ENCODE measurements at regions of chr10 and their contacts with region 1.

Region 1: DNA sequence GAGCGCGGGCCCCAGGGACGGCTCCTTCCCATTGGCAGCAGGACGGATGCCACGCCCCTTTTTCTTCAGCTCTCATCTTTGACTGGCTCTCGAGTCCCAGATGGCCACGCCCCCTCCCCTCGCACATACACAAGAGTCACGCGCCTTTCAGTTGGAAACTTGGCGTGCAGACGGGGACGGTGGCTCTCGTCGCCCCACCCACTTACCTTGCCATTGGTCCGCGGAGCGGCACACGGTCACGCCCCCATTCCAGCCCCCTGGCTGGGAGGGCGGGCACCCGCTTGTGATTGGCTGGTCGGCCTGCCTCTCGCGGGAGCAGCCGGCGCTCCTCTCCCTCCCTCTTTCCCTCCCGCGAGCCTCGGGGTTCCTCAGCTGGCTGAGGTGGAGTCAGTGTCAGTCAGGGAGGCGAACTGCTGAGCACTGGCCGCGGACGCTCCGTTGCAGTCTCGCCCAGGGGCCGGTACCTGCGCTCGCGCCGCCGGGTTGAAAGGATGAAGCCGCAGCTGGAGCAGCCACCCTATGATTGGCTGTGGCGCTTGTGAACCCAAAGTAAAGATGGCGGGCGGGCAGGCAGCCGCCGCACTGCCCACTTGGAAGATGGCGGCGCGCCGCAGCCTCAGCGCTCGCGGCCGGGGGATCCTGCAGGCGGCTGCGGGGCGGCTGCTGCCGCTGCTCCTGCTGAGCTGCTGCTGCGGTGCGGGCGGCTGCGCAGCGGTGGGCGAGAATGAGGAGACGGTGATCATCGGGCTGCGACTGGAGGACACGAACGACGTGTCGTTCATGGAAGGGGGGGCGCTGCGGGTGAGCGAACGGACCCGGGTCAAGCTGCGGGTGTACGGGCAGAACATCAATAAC is at the start of gene CNNM2:
- DNase-seq: peak; percentile 100
- ATAC-seq: peak; percentile 90
- H3K4me3 ChIP-seq: peak within 1 kb of the TSS; percentile 60 to 95 (median 93)
- H3K4me3 Mint-ChIP-seq: peak within 1 kb of the TSS; percentile 98
- H3K27ac ChIP-seq: peak within 1 kb of the TSS; percentile 92 to 94
- H3K27ac Mint-ChIP-seq: peak within 1 kb of the TSS; percentile 96
- H3K4me1 ChIP-seq: peaks cover 31 to 33% of the 10 kb centered on the region in 2 donors
- H3K4me1 Mint-ChIP-seq: peaks cover 53% of the 10 kb centered on the region
- H3K27me3 ChIP-seq: peaks cover 0 to 12% (median 6%) of the 10 kb centered on the region in 4 experiments
- H3K27me3 Mint-ChIP-seq: peaks cover 12% of the 10 kb centered on the region
- CTCF ChIP-seq: no peak
- total RNA-seq, gene CNNM2: 20.2 and 21.6 TPM in 2 replicates

Region 2: GRCh38 chr10:102132563-102133372 is 785.4 kb before region 1 on chr10 and contains the start of gene PPRC1:
- CTCF ChIA-PET with region 1: no interaction called
- POLR2A ChIA-PET with region 1: no interaction called
- intact Hi-C with region 1: loop called (anchors 10 kb)
- DNase-seq: peak; percentile 98
- ATAC-seq: peak; percentile 94
- H3K4me3 ChIP-seq: peak within 1 kb of the TSS; percentile 70 to 97 (median 82)
- H3K4me3 Mint-ChIP-seq: peak within 1 kb of the TSS; percentile 94
- H3K27ac ChIP-seq: peak within 1 kb of the TSS; percentile 79 to 88
- H3K27ac Mint-ChIP-seq: peak within 1 kb of the TSS; percentile 94
- H3K4me1 ChIP-seq: peaks cover 18 to 25% of the 10 kb centered on the region in 2 donors
- H3K4me1 Mint-ChIP-seq: peaks cover 36% of the 10 kb centered on the region
- H3K27me3 ChIP-seq: no peaks in the 10 kb centered on the region
- H3K27me3 Mint-ChIP-seq: no peaks in the 10 kb centered on the region
- CTCF ChIP-seq: peak; percentile 96
- total RNA-seq, gene PPRC1: 35.3 and 36.3 TPM in 2 replicates

Region 3: DNA sequence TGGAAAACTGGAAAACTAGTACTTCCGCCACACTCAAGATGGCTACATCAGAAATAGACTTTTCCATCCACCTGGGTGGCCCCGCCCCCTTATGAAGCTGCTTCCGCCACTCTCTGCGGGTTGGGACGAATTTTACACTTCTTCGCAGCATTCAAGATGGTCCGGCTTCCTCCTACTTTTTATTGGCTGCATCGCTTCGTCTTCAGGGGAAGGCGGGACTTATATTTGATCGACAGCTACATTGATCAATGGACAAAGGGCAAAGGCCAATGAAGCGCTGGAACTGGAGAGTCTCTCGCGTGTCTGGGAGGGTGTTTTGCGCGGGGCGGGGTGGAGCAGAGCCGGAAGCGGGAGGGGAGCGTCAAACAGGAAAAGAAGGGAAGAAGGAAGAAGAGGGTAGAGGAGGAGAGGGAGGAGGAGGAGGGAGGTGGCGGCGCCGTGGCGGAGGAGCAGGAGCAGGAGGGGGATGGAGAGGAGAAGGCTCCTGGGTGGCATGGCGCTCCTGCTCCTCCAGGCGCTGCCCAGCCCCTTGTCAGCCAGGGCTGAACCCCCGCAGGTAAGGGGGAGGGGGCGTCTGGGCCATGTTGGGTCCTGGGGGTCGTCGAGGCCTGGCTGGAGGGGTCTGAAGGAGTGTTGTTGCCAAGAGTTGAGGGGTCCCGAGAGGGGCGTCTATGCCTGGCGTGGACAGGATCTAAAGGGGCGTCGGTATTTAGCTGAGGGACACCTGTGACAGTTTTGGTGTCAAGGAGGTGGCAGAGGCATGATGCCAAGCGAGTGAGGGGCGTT is 174.4 kb before region 1 on chr10 and contains the start of gene WBP1L:
- CTCF ChIA-PET with region 1: no interaction called
- POLR2A ChIA-PET with region 1: no interaction called
- intact Hi-C with region 1: loop called (anchors 1 kb)
- DNase-seq: peak; percentile 98
- ATAC-seq: peak; percentile 95
- H3K4me3 ChIP-seq: peak within 1 kb of the TSS; percentile 70 to 96 (median 89)
- H3K4me3 Mint-ChIP-seq: peak within 1 kb of the TSS; percentile 89
- H3K27ac ChIP-seq: peak within 1 kb of the TSS; percentile 58 to 86
- H3K27ac Mint-ChIP-seq: peak within 1 kb of the TSS; percentile 88
- H3K4me1 ChIP-seq: peaks cover 24 to 25% of the 10 kb centered on the region in 2 donors
- H3K4me1 Mint-ChIP-seq: peaks cover 42% of the 10 kb centered on the region
- H3K27me3 ChIP-seq: peaks cover 0 to 2% (median 0%) of the 10 kb centered on the region in 4 experiments
- H3K27me3 Mint-ChIP-seq: no peaks in the 10 kb centered on the region
- CTCF ChIP-seq: peak; percentile 16
- total RNA-seq, gene WBP1L: 43.2 and 44.3 TPM in 2 replicates

Region 4: GRCh38 chr10:103069453-103070331 is 151.5 kb after region 1 on chr10:
- CTCF ChIA-PET with region 1: interaction called, 49 read pairs
- POLR2A ChIA-PET with region 1: no interaction called
- intact Hi-C with region 1: no loop called
- DNase-seq: peak; percentile 82
- ATAC-seq: peak; percentile 80
- H3K4me3 ChIP-seq: peak overlapping the region in 1 of 5 experiments; percentile 39
- H3K4me3 Mint-ChIP-seq: peak overlapping the region; percentile 64
- H3K27ac ChIP-seq: peak overlapping the region; percentile 50 to 73
- H3K27ac Mint-ChIP-seq: peak overlapping the region; percentile 67
- H3K4me1 ChIP-seq: peaks cover 26% of the 10 kb centered on the region in 2 donors
- H3K4me1 Mint-ChIP-seq: peaks cover 33% of the 10 kb centered on the region
- H3K27me3 ChIP-seq: no peaks in the 10 kb centered on the region
- H3K27me3 Mint-ChIP-seq: no peaks in the 10 kb centered on the region
- CTCF ChIP-seq: peak; percentile 80

Region 5: GRCh38 chr10:103244663-103245271 is 326.6 kb after region 1 on chr10:
- CTCF ChIA-PET with region 1: interaction called, 151 read pairs
- POLR2A ChIA-PET with region 1: interaction called, 7 read pairs
- intact Hi-C with region 1: no loop called
- DNase-seq: peak; percentile 81
- ATAC-seq: peak; percentile 77
- H3K4me3 ChIP-seq: no peak overlapping the region
- H3K4me3 Mint-ChIP-seq: no peak overlapping the region
- H3K27ac ChIP-seq: no peak overlapping the region
- H3K27ac Mint-ChIP-seq: no peak overlapping the region
- H3K4me1 ChIP-seq: peaks cover 18 to 26% of the 10 kb centered on the region in 2 donors
- H3K4me1 Mint-ChIP-seq: peaks cover 16% of the 10 kb centered on the region
- H3K27me3 ChIP-seq: peaks cover 0 to 3% (median 0%) of the 10 kb centered on the region in 4 experiments
- H3K27me3 Mint-ChIP-seq: no peaks in the 10 kb centered on the region
- CTCF ChIP-seq: peak; percentile 92

Region 6: GRCh38 chr10:103367782-103368518 is 449.8 kb after region 1 on chr10 and contains the start of gene TAF5:
- CTCF ChIA-PET with region 1: interaction called, 3 read pairs
- POLR2A ChIA-PET with region 1: interaction called, 6 read pairs
- intact Hi-C with region 1: loop called (anchors 1 kb)
- DNase-seq: peak; percentile 95
- ATAC-seq: peak; percentile 71
- H3K4me3 ChIP-seq: peak within 1 kb of the TSS; percentile 59 to 93 (median 88)
- H3K4me3 Mint-ChIP-seq: peak within 1 kb of the TSS; percentile 98
- H3K27ac ChIP-seq: peak within 1 kb of the TSS; percentile 62 to 81
- H3K27ac Mint-ChIP-seq: peak within 1 kb of the TSS; percentile 97
- H3K4me1 ChIP-seq: peaks cover 3 to 16% of the 10 kb centered on the region in 2 donors
- H3K4me1 Mint-ChIP-seq: peaks cover 10% of the 10 kb centered on the region
- H3K27me3 ChIP-seq: no peaks in the 10 kb centered on the region
- H3K27me3 Mint-ChIP-seq: no peaks in the 10 kb centered on the region
- CTCF ChIP-seq: no peak
- total RNA-seq, gene TAF5: 5.5 and 6.5 TPM in 2 replicates

Region 7: DNA sequence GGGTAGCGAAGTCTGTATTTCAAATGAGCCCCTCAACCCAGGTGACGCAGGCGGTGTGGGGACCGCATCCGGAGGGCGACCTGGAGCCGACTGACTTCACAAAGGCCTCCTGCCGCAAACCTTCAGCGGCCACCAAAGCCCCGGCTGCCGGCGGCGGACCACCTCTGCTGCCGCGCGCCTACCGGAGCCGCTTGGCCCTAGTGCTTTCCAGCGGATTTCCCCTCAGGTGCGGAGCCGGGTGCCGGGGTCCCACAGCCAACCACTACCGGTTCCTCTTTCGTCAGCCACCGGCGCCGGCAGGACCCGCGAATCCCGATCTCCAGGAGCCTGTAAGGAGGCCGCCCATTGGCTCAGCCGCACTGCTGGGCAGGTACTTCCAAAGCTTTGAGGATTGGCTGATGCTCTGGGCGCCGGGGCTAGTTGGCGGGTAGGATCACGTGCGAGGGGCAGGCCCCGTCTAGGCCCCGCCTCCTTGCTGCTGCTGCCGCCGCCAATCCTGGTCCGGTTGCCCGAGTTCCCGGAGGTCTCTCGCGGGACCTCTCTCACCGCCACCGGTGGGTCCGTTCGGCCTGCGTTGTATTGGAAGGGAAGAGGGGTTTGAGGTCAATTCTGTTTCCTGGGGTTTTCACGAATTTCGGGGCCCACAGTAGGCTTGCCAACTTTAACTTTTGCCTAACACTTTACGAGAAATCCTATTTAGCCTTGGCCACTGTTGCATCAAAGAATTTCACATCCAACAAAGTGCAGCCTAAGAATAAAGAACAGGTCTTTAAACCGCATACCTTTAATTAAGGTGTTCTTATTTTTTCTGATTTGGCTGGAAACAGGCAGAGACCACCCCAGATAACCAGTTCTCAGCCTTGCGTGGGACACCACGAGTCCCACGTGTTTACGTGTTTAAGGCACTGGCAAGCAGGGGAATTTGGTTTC is 1350.8 kb after region 1 on chr10 and contains the start of gene GSTO2:
- CTCF ChIA-PET with region 1: no interaction called
- POLR2A ChIA-PET with region 1: no interaction called
- intact Hi-C with region 1: loop called (anchors 5 kb)
- DNase-seq: peak; percentile 99
- ATAC-seq: peak; percentile 97
- H3K4me3 ChIP-seq: peak within 1 kb of the TSS; percentile 68 to 90 (median 86)
- H3K4me3 Mint-ChIP-seq: peak within 1 kb of the TSS; percentile 88
- H3K27ac ChIP-seq: peak within 1 kb of the TSS; percentile 90 to 95
- H3K27ac Mint-ChIP-seq: peak within 1 kb of the TSS; percentile 92
- H3K4me1 ChIP-seq: peaks cover 20 to 22% of the 10 kb centered on the region in 2 donors
- H3K4me1 Mint-ChIP-seq: peaks cover 37% of the 10 kb centered on the region
- H3K27me3 ChIP-seq: peaks cover 0 to 1% (median under 1%) of the 10 kb centered on the region in 4 experiments
- H3K27me3 Mint-ChIP-seq: no peaks in the 10 kb centered on the region
- CTCF ChIP-seq: no peak
- total RNA-seq, gene GSTO2: 0.89 and 1.4 TPM in 2 replicates